Activated CD8-positive, alpha-beta memory T cell treated with anti-CD3 and anti-CD28 coated beads, Interleukin-2, amount 10 ng/mL, durations not matched to agents 7 days and 5 days (primary cell): ENCODE measurements at regions of chr3 and their contacts with region 1.

Region 1: DNA sequence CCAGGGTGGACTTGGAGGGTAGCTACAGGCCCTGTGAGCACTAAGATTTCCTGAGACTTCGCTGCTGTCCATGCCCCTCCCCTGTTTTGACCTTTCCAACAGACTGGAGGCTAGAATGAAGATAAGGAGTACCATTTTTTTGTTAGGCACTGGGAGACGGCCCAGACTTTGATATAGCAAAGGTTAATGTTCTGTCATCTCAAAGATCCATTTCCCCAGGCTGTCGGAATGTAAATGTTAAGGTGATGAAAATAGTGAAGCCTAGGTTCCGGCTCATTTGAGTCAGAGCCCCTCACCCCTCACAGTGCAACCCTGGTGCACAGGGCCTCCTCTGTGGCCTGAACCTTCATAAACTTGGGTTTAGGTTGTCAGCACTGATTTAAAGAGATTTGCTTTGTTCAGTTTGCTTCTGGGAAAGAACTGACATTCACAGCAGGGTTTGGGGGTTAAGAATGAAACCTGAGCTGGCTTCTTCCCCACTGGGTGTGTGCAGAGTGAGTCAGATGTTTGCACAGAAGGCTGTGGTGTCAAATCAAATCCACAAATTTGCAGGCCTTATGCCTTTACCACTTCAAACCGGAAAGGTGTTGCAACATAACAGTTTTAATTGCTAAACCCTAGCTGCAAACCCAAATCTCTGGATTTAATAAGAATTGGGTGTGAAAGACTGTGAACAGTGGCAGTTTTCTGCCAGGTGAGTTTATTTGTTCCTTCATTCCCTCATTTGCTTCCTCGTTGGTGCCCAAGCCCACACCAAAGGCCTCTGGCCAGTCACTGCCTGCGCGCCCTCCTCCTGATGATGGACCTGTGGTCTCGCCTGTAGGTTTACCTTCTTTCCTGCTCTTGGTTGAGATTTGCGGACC is 20.6 kb upstream of the KCTD6 start:
- DNase-seq: peak; percentile 88
- ATAC-seq: peak; percentile 98
- H3K4me3 Mint-ChIP-seq: no peak overlapping the region
- H3K27ac Mint-ChIP-seq: peak overlapping the region; percentile 83
- H3K4me1 Mint-ChIP-seq: peaks cover 52% of the 10 kb centered on the region
- H3K27me3 Mint-ChIP-seq: peaks cover 15% of the 10 kb centered on the region

Region 2: DNA sequence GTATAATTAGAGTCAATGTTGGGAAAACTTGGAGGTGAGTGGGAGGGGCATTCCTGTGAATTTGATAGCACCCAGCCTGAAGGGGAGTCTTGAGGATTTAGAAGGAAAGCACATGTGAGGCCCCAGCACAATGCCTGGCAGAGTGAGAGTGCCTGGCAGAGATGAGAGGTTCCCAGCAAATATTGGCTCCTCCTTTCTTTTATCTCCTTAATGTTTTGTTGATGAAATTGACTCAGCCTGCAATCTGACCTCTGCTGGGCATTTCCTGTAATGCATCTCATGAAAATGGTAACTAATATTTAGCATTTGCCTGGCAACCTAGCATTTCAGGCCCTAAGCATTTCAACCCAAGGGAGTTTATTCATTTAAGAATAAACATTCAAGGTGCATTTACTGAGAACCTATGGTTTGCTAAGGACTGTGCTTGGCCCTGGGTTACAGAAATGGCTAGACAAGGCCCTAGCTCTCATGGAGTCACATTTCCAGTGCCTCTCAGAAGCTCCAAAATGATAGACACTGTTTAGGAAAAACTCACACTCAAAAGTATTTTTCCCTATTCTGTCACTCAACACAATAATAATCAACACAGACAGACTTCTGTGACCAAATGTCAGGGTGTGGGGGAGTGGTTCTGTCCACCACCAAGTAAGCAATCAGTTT is 56.6 kb before region 1 on chr3:
- CTCF ChIA-PET with region 1: no interaction called
- DNase-seq: peak; percentile 68
- ATAC-seq: peak; percentile 78
- H3K4me3 Mint-ChIP-seq: no peak overlapping the region
- H3K27ac Mint-ChIP-seq: no peak overlapping the region
- H3K4me1 Mint-ChIP-seq: peaks cover 13% of the 10 kb centered on the region
- H3K27me3 Mint-ChIP-seq: no peaks in the 10 kb centered on the region

Region 3: DNA sequence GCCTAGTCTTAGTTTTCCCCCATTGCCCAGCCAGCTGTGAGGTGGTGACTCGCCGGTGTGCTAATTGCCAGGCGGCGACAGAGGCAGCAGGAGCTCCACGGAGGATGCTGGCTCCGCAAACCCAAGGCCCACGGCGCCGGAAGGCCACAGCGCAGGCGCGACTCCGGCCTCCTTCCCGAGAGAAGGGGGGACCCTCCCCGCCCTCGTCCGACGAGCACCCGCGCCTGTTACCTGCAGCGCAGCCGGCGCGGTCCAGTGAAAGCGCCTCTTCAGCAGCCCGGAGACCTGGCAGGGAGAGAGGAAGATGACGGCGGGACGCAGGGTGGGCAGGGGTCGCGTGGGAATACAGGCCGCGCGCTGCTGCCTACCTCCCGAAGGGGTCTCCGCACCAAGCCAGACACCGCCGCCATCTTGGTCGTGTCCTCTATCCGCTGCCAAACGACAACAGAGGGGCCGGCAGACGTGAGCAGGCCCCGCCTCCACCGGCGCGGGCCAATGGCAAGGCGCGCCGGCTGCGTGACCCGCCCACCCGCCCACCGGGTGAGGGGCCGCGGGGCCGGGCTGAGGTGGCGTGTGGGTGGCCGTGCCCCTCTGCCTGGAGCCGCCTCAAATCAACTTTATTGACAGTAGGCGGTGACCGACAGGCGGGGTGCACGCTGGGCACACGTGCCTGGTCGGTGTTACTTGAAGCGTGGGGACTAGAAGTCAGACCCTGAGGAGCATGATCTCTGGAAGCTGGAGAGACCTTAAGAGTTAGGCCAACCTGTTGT is 37.7 kb before region 1 on chr3 and contains the start of gene PDHB:
- CTCF ChIA-PET with region 1: interaction called, 12 read pairs
- DNase-seq: peak; percentile 93
- ATAC-seq: peak; percentile 97
- H3K4me3 Mint-ChIP-seq: peak within 1 kb of the TSS; percentile 83
- H3K27ac Mint-ChIP-seq: peak within 1 kb of the TSS; percentile 79
- H3K4me1 Mint-ChIP-seq: peaks cover 24% of the 10 kb centered on the region
- H3K27me3 Mint-ChIP-seq: peaks cover 7% of the 10 kb centered on the region
- total RNA-seq, gene PDHB: 43.4 to 60.6 TPM

Region 4: GRCh38 chr3:58482917-58483636 is 11.8 kb after region 1 on chr3:
- CTCF ChIA-PET with region 1: interaction called, 10 read pairs
- DNase-seq: no peak
- ATAC-seq: peak; percentile 72
- H3K4me3 Mint-ChIP-seq: no peak overlapping the region
- H3K27ac Mint-ChIP-seq: no peak overlapping the region
- H3K4me1 Mint-ChIP-seq: peaks cover 3% of the 10 kb centered on the region
- H3K27me3 Mint-ChIP-seq: peaks cover 50% of the 10 kb centered on the region